Activated CD4-positive, alpha-beta T cell treated with anti-CD3 and anti-CD28 coated beads for 36 hours (primary cell): ENCODE measurements at regions of chr12 and their contacts with region 1.

Region 1: DNA sequence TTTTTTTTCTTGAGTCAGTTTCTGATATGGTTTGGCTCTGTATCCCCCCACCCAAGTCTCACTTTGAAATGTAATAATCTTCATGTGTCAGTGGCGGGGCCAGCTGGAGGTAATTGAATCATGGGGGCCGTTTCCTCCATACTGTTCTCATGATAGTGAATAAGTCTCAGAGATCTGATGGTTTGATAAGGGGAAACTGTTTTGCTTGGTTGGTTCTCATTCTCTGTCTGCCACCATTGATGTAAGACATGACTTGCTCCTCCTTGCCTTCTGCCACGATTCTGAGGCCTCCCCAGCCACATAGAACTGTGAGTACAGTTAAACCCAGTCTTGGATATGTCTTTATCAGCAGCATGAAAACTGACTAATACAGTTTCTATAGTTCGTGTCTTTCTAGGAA is 42.9 kb downstream of the WNK1 start:
- DNase-seq: peak; percentile 86
- ATAC-seq: peak; percentile 90
- H3K4me3 Mint-ChIP-seq: peak overlapping the region; percentile 56
- H3K27ac Mint-ChIP-seq: peak overlapping the region; percentile 85
- H3K4me1 Mint-ChIP-seq: peaks cover 84% of the 10 kb centered on the region
- H3K27me3 Mint-ChIP-seq: no peaks in the 10 kb centered on the region

Region 2: GRCh38 chr12:288687-289086 is 506.6 kb before region 1 on chr12:
- CTCF ChIA-PET with region 1: no interaction called
- POLR2A ChIA-PET with region 1: no interaction called
- intact Hi-C with region 1: no loop called
- DNase-seq: no peak
- ATAC-seq: no peak
- H3K4me3 Mint-ChIP-seq: no peak overlapping the region
- H3K27ac Mint-ChIP-seq: no peak overlapping the region
- H3K4me1 Mint-ChIP-seq: peaks cover 56% of the 10 kb centered on the region
- H3K27me3 Mint-ChIP-seq: no peaks in the 10 kb centered on the region

Region 3: GRCh38 chr12:591167-592023 is 203.9 kb before region 1 on chr12:
- CTCF ChIA-PET with region 1: no interaction called
- POLR2A ChIA-PET with region 1: no interaction called
- intact Hi-C with region 1: no loop called
- DNase-seq: no peak
- ATAC-seq: peak; percentile 74
- H3K4me3 Mint-ChIP-seq: no peak overlapping the region
- H3K27ac Mint-ChIP-seq: no peak overlapping the region
- H3K4me1 Mint-ChIP-seq: no peaks in the 10 kb centered on the region
- H3K27me3 Mint-ChIP-seq: no peaks in the 10 kb centered on the region

Region 4: DNA sequence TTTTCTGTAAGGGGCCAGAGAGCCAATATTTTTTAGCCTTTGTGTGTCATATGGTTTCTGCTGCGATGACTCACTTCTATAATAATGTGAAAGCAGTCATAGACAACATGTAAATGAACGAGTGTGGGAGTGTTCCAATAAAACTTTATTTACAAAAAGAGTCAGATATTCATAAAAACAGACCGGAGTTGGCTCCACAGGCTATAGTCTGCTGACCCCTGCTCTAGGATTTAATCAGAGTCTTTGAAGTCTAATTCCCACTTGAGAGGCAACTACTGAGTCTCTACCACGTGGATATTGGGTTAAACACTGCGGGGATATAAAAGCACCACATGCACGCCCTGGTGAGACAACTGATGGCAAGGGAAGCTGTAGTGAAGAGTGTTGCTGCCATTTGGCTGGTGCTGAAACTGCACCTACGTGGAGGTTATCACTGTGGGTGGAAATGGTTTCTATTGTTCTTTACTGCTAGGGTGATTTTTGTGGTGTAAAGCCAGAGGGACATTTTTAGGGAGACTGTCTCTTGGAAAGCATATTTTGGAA is 128.5 kb before region 1 on chr12:
- CTCF ChIA-PET with region 1: interaction called, 3 read pairs
- POLR2A ChIA-PET with region 1: no interaction called
- intact Hi-C with region 1: loop called in 1 of 2 experiments (anchors 1 kb)
- DNase-seq: peak; percentile 53
- ATAC-seq: peak; percentile 45
- H3K4me3 Mint-ChIP-seq: peak overlapping the region; percentile 36
- H3K27ac Mint-ChIP-seq: peak overlapping the region; percentile 79
- H3K4me1 Mint-ChIP-seq: peaks cover 86% of the 10 kb centered on the region
- H3K27me3 Mint-ChIP-seq: no peaks in the 10 kb centered on the region

Region 5: DNA sequence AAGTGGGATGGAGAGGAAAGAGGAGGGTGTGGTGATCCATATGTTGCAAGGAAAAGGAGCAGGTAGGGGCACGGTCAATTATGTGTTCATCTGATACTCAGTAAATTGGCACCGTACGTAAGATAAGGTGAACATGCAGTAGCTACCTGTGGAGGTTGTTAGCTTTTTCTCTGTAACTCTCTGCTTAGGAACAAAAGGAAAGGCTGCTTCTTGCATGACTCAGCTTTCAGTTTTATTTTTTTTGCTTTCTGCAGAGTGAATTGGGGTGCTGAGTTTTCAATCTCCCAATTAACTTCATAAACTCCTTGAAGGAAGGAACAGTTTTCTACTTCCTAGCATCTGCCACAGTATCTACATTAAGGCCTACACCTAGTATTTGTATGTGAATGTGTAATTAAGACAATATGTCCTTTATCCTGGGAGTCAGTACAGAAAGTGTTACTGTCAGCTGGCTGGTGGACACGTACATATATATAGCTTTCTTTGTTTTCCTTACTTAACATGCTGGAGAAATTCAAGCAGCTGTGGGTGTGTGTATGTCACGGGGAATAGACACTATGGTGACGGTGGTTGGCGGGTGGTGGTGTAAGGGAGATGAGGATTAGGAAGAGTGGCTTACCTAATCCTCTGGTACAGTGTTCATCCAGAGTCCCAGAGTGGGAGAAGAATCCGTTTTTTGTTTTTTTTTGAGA is 83.0 kb before region 1 on chr12:
- CTCF ChIA-PET with region 1: no interaction called
- POLR2A ChIA-PET with region 1: no interaction called
- intact Hi-C with region 1: loop called in 1 of 2 experiments (anchors 1 kb)
- DNase-seq: no peak
- ATAC-seq: no peak
- H3K4me3 Mint-ChIP-seq: no peak overlapping the region
- H3K27ac Mint-ChIP-seq: peak overlapping the region; percentile 49
- H3K4me1 Mint-ChIP-seq: peaks cover 40% of the 10 kb centered on the region
- H3K27me3 Mint-ChIP-seq: no peaks in the 10 kb centered on the region

Region 6: DNA sequence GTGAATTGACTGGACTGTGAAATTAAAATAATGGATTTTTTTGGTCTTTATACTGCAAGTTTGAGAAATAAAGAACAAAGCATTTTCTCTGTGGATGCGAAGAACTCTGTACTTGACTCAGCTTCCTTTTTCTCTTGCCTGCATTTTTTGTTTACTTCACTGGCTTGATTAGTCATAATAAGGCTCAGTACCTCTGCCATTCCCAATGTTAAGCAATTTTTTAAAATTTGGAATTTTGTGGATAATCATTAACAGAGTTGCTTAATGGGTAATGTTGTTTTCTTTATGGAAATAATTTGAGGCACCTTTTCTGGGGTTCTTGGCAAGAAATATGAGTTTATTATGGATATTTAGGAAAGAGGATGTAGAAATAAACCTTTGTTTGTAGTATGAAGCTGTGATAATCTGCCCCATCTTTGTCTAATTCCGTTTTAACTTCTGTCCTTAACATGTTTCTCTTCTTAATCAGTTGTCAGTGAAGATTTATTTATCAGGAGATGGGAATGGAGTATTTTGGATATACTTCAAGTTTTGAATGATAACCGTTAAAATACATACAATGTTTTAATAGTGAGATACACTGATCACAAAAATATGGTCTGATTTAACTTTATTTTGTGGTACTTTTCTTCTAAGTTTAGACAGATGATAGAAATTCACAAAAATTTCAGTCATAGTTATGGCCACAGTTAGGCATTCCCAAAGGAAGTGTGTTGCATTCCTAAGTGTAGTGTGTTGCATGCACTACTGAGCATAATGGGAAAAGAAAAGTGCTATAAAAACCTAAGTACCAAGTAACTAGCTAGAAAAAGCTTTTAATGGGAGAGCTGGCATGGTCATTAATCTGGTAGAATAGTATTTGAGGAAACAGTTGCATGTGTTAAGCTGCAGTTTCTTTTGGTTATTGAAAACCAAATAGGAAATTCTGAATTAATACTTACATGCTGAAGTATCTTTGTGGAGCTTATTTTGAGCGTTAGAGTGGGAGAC is 15.3 kb before region 1 on chr12:
- CTCF ChIA-PET with region 1: interaction called, 17 read pairs
- POLR2A ChIA-PET with region 1: interaction called, 3 read pairs
- intact Hi-C with region 1: loop called in 1 of 2 experiments (anchors 2 kb)
- DNase-seq: no peak
- ATAC-seq: peak; percentile 62
- H3K4me3 Mint-ChIP-seq: peak overlapping the region; percentile 64
- H3K27ac Mint-ChIP-seq: peak overlapping the region; percentile 75
- H3K4me1 Mint-ChIP-seq: peaks cover 70% of the 10 kb centered on the region
- H3K27me3 Mint-ChIP-seq: no peaks in the 10 kb centered on the region

Region 7: DNA sequence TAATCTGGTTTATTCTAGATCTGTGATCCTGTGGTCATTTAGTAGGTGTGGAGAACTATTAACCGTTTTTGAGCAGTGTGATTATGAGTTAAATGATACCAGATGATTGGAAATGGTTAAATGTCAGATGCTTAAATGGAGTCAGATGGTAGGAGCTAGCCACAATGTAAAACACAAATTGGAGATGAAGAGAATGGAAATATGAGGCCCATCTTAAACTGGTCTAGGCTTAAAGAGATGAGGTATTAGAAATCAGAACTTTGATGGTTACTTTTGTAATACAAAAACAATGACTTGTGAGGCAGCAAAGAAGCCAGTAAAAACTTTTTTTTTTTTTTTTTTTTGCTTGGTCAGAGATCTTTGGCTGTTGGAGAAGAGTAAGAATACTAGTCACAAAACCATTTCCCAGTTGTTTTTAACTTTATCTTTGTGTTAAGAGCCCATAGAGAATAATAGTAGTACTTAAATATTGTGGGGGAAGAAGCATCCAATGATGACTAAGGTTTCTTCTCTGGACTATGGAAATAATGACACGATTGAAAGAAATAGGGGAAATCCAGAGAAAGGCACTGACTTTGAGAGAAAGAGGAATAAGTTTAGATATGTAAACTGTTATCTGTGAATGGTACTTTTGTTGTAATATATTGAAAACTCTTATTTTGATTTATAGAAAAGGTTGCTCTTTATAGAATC is 53.0 kb after region 1 on chr12:
- CTCF ChIA-PET with region 1: no interaction called
- POLR2A ChIA-PET with region 1: no interaction called
- intact Hi-C with region 1: loop called in 1 of 2 experiments (anchors 1 kb)
- DNase-seq: no peak
- ATAC-seq: peak; percentile 72
- H3K4me3 Mint-ChIP-seq: peak overlapping the region; percentile 0
- H3K27ac Mint-ChIP-seq: peak overlapping the region; percentile 85
- H3K4me1 Mint-ChIP-seq: peaks cover 54% of the 10 kb centered on the region
- H3K27me3 Mint-ChIP-seq: no peaks in the 10 kb centered on the region

Region 8: DNA sequence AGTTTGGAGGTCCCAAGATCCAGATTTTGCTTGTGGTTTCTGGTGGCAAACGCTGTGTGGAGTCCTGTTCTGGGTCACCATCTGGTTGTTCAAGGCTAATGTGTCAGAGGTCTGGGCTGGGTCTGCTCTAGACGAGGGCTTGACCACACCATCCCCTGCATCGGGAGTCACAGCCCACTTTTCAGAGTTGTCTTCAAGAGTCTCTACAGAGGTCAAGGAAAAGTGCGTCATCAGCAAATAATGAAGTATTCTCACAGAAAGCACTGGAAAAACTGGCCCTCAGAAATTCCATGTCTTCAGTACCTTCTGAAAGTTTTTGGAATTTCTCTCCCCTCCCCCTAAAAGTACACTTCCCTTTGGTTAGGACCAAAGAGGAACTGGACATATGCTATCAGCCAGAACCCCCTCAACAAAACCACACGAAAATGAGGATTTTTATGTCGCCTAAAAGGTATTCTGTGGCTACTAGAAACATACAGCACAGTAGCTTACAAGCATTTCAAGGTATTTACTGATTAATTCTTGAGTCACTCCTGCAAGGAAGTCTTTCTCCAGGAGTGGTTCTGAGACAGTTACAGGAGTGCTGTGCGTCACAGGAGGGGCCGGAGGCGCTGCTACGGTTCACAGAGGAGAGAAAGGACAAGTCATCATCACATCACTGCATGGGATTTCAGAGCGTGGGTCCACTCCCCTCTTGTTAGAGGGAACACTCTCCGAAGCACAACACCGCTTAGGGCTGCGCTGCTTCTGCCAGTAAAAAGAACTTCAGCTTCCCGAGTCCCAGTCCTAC is 118.8 kb after region 1 on chr12:
- CTCF ChIA-PET with region 1: no interaction called
- POLR2A ChIA-PET with region 1: no interaction called
- intact Hi-C with region 1: no loop called
- DNase-seq: no peak
- ATAC-seq: no peak
- H3K4me3 Mint-ChIP-seq: no peak overlapping the region
- H3K27ac Mint-ChIP-seq: peak overlapping the region; percentile 65
- H3K4me1 Mint-ChIP-seq: peaks cover 13% of the 10 kb centered on the region
- H3K27me3 Mint-ChIP-seq: no peaks in the 10 kb centered on the region